ENCODE measurements at regions of chr11 and their contacts with region 1.

Region 1: GRCh38 chr11:110429731-110430266 is at the start of gene FDX1:
- DNase-seq: peak; percentile 76
- H3K4me3 ChIP-seq: peak within 1 kb of the TSS; percentile 79 to 89
- H3K27ac ChIP-seq: peak within 1 kb of the TSS; percentile 90 to 92
- H3K4me1 ChIP-seq: no peaks in the 10 kb centered on the region
- H3K27me3 ChIP-seq: no peaks in the 10 kb centered on the region
- CTCF ChIP-seq: peak; percentile 32 to 79 (median 58)
- POLR2A ChIP-seq: peak; percentile 57
- total RNA-seq, gene FDX1: 12.8 to 21.2 TPM

Region 2: DNA sequence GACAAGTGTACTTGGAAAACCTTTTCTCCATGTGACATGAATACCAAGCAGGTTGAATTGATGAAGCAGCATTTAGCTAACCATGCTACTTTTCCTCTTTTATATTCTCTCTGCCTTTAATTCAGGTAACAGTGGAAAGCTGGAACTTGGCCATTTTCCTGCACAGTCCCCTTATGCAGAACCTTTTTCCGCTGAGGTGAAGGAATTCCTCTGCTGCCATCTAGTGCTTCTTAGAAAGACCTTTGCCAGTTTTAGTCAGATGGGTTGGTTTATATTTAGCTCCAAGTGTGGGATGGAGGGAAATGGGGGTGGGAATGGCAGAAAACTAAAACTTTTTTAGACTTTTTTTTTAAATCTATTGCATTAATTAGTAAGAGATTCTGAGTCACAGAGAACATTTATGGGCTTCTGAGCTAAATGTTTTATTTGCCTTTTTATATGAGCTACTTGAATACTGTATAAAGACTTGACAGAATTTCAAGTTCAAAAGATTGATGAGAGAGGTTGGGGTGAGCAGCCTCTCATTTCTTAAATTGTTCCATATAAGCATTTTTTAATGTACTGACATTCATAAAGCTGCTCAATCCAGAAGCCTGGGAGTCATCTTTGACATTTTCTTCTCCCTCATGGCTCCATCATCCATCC is 490.5 kb before region 1 on chr11:
- intact Hi-C with region 1: loop called (anchors 5 kb)
- DNase-seq: peak; percentile 29
- H3K4me3 ChIP-seq: no peak overlapping the region
- H3K27ac ChIP-seq: no peak overlapping the region
- H3K4me1 ChIP-seq: no peaks in the 10 kb centered on the region
- H3K27me3 ChIP-seq: no peaks in the 10 kb centered on the region
- CTCF ChIP-seq: peak in 2 of 4 experiments; percentile 27 to 37
- POLR2A ChIP-seq: no peak

Region 3: GRCh38 chr11:110296226-110297075 is 133.3 kb before region 1 on chr11 and contains the start of gene RDX:
- intact Hi-C with region 1: loop called (anchors 10 kb)
- DNase-seq: peak; percentile 63
- H3K4me3 ChIP-seq: peak within 1 kb of the TSS; percentile 87 to 93
- H3K27ac ChIP-seq: peak within 1 kb of the TSS; percentile 96 to 99
- H3K4me1 ChIP-seq: no peaks in the 10 kb centered on the region
- H3K27me3 ChIP-seq: no peaks in the 10 kb centered on the region
- CTCF ChIP-seq: peak in 3 of 4 experiments; percentile 16 to 29 (median 20)
- POLR2A ChIP-seq: no peak
- total RNA-seq, gene RDX: 45.4 to 136 TPM

Region 4: DNA sequence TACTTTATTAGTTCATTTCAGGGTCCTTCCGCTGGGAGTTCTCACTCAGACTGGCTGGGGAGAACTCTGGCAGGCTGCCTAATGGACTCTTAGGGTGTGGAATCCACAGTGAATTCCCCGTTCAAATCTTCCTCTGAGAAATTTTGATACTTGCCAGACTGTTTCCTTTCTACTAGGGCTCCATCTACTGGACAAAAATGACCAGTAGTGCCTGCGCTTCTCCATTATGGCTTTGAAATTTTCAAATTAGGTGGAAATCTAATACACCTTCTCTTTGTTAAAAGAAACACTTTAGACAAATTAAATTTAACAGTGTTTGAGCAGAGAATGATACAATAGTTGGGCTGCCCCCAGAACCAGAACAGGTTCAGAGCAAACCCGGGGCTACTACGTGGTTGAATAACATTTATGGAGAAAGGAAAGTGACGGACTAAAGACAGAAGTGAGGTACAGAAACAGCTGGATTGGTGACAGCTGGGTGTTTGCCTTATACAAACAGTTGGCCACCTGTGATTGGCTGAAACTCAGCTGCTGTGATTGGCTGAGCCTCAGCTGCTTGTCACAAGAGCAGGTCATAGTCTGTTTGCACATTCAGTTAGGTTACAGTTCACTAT is 53.0 kb before region 1 on chr11:
- intact Hi-C with region 1: loop called (anchors 5 kb)
- DNase-seq: peak; percentile 70
- H3K4me3 ChIP-seq: peak overlapping the region in 1 of 2 donors; percentile 11
- H3K27ac ChIP-seq: peak overlapping the region; percentile 27 to 49
- H3K4me1 ChIP-seq: no peaks in the 10 kb centered on the region
- H3K27me3 ChIP-seq: no peaks in the 10 kb centered on the region
- CTCF ChIP-seq: peak; percentile 17 to 76 (median 63)
- POLR2A ChIP-seq: no peak

Region 5: DNA sequence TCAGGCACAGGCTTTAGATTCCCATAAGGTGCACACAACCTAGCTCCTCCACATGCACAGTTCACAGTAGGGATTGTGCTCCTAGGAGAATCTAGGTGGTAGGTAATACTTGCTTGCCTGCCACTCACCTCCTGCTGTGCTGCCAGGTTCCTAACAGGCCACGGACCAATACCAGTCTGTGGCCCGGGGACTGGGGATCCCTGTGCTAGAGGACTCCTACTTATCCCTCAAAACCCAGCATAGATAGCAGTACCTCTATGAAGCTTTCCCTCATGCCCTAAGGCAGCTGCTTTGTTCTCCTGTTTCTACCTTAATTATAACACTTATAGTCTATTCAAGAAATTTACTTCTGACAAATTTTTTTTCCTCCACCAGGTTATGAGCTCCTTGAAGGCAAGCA is 245.7 kb after region 1 on chr11:
- intact Hi-C with region 1: no loop called
- DNase-seq: no peak
- H3K4me3 ChIP-seq: no peak overlapping the region
- H3K27ac ChIP-seq: no peak overlapping the region
- H3K4me1 ChIP-seq: no peaks in the 10 kb centered on the region
- H3K27me3 ChIP-seq: no peaks in the 10 kb centered on the region
- CTCF ChIP-seq: no peak
- POLR2A ChIP-seq: no peak